ENCODE measurements at regions of chr16 and their contacts with region 1.

Region 1: GRCh38 chr16:31179747-31180459 is at the start of gene FUS:
- DNase-seq: peak; percentile 82
- H3K4me3 Mint-ChIP-seq: peak within 1 kb of the TSS; percentile 95
- H3K27ac Mint-ChIP-seq: peak within 1 kb of the TSS; percentile 99
- H3K4me1 Mint-ChIP-seq: peaks cover 26% of the 10 kb centered on the region
- H3K27me3 Mint-ChIP-seq: no peaks in the 10 kb centered on the region
- CTCF ChIP-seq: no peak
- total RNA-seq, gene FUS: 451 and 481 TPM in 2 replicates

Region 2: DNA sequence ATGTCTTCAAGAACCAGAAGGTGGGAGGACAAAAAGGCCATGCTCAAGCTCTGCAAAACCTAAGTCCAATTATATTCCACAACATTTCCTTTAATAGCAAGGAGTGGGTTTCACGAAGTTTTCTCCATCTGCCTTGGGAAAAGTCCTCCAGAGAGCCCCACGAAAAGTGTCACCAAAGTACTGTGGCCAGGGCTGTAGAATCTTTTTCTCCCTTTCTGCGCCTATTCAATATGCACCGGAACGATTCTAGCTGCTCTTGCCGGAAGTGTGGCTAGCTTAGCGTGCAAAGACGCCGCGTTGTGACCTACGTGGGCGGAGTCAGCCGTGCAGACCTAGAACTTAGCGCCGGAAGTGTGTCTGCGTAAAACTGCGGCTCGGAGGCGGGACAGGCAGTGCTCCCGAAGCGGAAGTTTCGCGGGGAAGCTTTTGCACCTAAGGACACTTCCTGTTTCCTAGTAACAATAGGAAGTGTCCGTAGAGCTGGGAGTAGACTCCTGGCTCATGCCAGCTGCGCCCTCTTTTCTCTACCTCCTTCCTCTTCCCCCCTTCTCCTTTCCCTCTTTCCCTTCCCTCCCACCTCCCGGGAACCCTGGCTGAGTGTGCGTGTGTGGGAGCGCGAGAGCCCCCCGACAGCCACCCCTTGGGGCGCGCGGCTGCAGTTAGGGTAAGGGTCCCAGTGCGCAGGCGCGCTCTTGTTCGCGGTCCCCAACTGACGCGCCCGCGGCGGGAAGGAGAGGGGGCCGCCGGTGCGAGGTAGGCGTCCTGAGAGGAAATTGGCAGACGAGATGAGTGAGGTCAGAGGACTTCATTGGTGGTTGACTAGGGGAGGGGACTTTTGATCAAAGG is 105.7 kb before region 1 on chr16 and contains the starts of genes ZNF646 and ZNF668:
- CTCF ChIA-PET with region 1: interaction called, 3 read pairs
- POLR2A ChIA-PET with region 1: interaction called, 13 read pairs
- intact Hi-C with region 1: no loop called
- DNase-seq: peak; percentile 98
- H3K4me3 Mint-ChIP-seq: peak within 1 kb of the TSS; percentile 97
- H3K27ac Mint-ChIP-seq: peak within 1 kb of the TSS; percentile 97
- H3K4me1 Mint-ChIP-seq: peaks cover 24% of the 10 kb centered on the region
- H3K27me3 Mint-ChIP-seq: no peaks in the 10 kb centered on the region
- CTCF ChIP-seq: no peak
- total RNA-seq, gene ZNF646: 12.6 and 15.2 TPM in 2 replicates
- total RNA-seq, gene ZNF668: 11.9 and 15.1 TPM in 2 replicates

Region 3: DNA sequence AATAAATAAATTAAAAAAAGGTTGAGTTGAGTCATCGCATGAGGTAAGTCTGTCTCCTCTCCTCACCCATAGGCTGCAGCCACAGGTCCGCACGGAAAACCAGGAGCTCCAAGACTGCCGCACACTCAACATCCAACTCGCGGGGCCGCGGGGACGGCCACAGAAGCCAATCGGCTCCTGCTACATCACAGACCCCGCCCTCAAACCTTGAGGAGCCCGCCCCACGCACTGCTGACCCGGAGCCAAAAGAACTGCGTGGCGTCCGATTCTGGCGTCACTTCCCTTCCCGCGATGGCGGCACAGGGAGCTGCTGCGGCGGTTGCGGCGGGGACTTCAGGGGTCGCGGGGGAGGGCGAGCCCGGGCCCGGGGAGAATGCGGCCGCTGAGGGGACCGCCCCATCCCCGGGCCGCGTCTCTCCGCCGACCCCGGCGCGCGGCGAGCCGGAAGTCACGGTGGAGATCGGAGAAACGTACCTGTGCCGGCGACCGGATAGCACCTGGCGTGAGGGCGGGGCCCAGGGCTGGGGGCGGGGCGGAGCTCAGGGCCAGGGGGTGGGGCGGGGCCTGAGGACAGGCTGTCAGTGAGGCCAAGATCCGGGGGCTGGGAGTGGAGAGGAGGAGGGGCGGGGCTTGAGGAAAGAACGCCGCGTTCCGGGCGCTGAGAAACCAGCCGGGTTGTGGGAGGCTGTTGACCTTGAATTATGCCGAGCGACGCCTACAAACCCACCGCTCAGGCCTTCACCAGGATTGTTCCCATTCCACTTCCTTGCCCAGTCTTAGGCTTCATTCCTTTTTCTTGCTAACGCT is 62.3 kb before region 1 on chr16 and contains the start of gene KAT8:
- CTCF ChIA-PET with region 1: interaction called, 3 read pairs
- POLR2A ChIA-PET with region 1: interaction called, 37 read pairs
- intact Hi-C with region 1: loop called (anchors 5 kb)
- DNase-seq: peak; percentile 99
- H3K4me3 Mint-ChIP-seq: peak within 1 kb of the TSS; percentile 74
- H3K27ac Mint-ChIP-seq: peak within 1 kb of the TSS; percentile 94
- H3K4me1 Mint-ChIP-seq: peaks cover 16% of the 10 kb centered on the region
- H3K27me3 Mint-ChIP-seq: no peaks in the 10 kb centered on the region
- CTCF ChIP-seq: no peak
- total RNA-seq, gene KAT8: 42.0 and 45.8 TPM in 2 replicates

Region 4: GRCh38 chr16:31142109-31143010 is 37.5 kb before region 1 on chr16:
- CTCF ChIA-PET with region 1: interaction called, 6 read pairs
- POLR2A ChIA-PET with region 1: interaction called, 53 read pairs
- intact Hi-C with region 1: loop called (anchors 5 kb)
- DNase-seq: peak; percentile 99
- H3K4me3 Mint-ChIP-seq: peak overlapping the region; percentile 71
- H3K27ac Mint-ChIP-seq: peak overlapping the region; percentile 91
- H3K4me1 Mint-ChIP-seq: peaks cover 21% of the 10 kb centered on the region
- H3K27me3 Mint-ChIP-seq: no peaks in the 10 kb centered on the region
- CTCF ChIP-seq: peak; percentile 90

Region 5: GRCh38 chr16:31273676-31274075 is 93.8 kb after region 1 on chr16:
- CTCF ChIA-PET with region 1: interaction called, 4 read pairs
- POLR2A ChIA-PET with region 1: interaction called, 17 read pairs
- intact Hi-C with region 1: no loop called
- DNase-seq: peak; percentile 87
- H3K4me3 Mint-ChIP-seq: no peak overlapping the region
- H3K27ac Mint-ChIP-seq: peak overlapping the region; percentile 92
- H3K4me1 Mint-ChIP-seq: peaks cover 29% of the 10 kb centered on the region
- H3K27me3 Mint-ChIP-seq: no peaks in the 10 kb centered on the region
- CTCF ChIP-seq: no peak

Region 6: GRCh38 chr16:31440516-31441184 is 260.7 kb after region 1 on chr16:
- CTCF ChIA-PET with region 1: no interaction called
- POLR2A ChIA-PET with region 1: interaction called, 9 read pairs
- intact Hi-C with region 1: loop called (anchors 5 kb)
- DNase-seq: no peak
- H3K4me3 Mint-ChIP-seq: no peak overlapping the region
- H3K27ac Mint-ChIP-seq: no peak overlapping the region
- H3K4me1 Mint-ChIP-seq: peaks cover 12% of the 10 kb centered on the region
- H3K27me3 Mint-ChIP-seq: no peaks in the 10 kb centered on the region
- CTCF ChIP-seq: no peak

Region 7: DNA sequence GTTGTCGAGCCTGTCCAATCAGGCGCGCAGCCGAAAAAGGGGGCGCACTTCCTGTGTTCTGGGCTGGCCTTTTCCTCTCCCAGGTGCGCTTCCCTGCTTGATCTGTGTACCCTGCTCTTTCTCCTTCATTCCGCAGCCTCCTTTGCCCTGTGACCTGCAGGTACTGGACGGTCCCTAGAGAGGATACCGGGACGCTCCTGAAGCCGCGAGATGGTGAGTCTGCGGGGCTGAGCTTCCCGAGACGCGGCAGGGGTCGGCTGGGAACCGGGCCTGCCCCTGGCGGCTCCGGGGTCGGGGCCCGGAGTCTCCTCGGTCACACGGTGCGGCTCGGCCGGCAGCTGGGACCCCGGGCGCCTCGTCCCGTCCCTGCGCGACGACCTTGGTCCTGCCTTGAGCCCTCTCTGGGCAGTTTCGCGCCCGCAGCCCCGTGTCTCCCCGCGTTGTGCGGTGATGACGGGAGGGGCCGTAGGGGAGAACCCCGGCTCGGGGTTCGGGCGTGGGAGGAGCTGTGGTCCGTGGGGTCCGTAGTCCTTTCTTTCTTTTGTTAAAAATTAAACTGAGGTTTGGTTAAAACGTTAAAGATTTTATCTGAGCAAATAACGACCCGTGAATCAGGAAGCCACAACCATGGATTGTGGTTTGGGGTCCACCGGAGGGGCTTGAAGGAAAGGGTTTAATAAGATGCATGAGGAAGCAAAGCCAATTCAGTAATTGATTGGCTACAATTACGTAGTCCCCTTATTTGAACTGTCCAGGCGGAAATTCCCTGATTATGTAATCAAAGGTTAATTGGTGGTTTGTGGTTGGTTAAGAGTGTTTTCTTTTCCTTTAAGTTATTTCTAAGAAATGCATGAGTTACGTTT is 520.9 kb after region 1 on chr16:
- CTCF ChIA-PET with region 1: no interaction called
- POLR2A ChIA-PET with region 1: no interaction called
- intact Hi-C with region 1: loop called (anchors 10 kb)
- DNase-seq: peak; percentile 89
- H3K4me3 Mint-ChIP-seq: peak overlapping the region; percentile 87
- H3K27ac Mint-ChIP-seq: peak overlapping the region; percentile 90
- H3K4me1 Mint-ChIP-seq: peaks cover 11% of the 10 kb centered on the region
- H3K27me3 Mint-ChIP-seq: no peaks in the 10 kb centered on the region
- CTCF ChIP-seq: no peak

Measured in MCF 10A (cell line).